Left cardiac atrium (tissue), 4 donors: ENCODE measurements at regions of chr7 and their contacts with region 1.

Region 1: GRCh38 chr7:25565949-25566348 is 337.7 kb upstream of the NPVF start:
- DNase-seq: peak; percentile 45
- ATAC-seq: peak in 1 of 2 donors; percentile 20

Region 2: DNA sequence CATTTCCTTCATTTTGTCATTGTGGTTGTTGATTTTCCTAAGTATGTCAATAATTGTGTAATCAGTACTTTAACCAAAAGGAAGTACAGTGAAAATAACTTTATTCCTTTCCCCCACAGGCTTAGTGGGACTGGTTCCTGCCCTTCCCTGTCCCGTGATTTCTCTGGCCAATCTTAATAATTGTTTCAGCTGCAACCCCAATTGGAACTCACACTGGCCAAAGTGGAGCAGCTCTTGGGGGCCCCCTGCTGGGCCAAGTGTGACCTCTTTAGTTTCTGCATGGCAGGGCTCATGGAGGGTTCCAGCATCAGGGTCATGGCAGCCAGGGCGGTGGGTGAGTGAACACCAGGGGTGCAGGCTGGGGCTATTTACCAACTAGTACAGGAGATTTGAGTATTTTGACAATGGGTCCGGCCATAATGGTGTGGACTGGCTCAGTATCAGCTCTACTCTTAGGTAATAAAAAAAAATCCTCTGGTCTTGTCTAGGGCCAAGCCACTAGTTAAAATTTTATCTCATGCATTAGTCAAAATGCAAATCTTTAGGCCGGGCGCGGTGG is 472.6 kb before region 1 on chr7:
- intact Hi-C with region 1: no loop called
- DNase-seq: peak; percentile 67
- ATAC-seq: peak; percentile 88 to 90

Region 3: GRCh38 chr7:25196132-25196891 is 369.6 kb before region 1 on chr7:
- intact Hi-C with region 1: no loop called
- DNase-seq: no peak
- ATAC-seq: peak in 1 of 2 donors; percentile 27

Region 4: DNA sequence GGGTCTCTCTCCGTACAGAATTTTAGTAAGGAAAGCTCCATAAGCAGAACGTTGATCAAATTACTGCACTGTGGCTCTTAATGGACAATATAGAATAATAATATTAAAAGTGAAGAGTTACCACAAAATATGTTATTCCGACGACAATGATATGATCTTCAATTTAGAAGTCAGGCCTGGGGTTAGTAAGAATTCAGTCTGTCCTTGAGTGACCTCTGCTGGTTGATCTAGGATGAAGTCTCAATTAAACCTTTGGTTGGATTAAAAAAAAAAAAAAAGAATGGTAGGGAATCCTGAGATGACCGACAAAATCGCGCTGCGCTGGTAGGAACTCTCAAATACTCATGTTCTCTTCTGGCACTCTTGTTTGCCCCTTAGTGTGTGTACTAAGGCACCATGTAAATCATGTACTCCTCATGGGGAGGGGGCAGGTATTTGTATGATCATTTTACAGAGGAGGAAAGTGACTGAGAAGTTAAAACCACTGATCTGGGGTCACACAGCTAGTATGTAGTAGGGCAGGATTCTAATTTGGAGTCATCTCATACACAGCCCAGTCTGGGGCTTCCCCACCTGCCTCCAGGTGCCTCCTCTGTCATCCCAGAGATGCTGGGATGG is 176.4 kb before region 1 on chr7:
- intact Hi-C with region 1: loop called (anchors 1 to 5 kb)
- DNase-seq: no peak
- ATAC-seq: peak; percentile 30 to 32

Region 5: DNA sequence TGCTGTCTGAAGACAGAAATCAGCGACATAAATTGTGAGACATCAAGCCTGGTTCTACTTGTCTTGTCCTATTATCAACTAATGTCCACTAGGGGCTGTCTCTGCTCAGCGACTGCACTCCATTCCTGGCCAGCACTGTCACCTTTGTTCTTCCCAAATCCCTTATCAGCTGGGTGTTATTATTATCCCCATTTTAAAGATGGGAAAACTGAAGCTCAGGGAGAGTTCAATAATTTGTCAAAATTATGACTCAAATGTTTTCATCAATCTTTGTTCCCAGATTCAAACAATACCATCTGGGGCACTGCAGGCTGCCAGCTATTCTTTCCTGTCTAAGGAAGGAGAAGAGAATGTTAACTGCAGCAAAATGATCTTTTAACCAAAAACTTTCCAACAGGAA is 154.5 kb after region 1 on chr7:
- intact Hi-C with region 1: no loop called
- DNase-seq: no peak
- ATAC-seq: peak; percentile 27 to 38

Region 6: DNA sequence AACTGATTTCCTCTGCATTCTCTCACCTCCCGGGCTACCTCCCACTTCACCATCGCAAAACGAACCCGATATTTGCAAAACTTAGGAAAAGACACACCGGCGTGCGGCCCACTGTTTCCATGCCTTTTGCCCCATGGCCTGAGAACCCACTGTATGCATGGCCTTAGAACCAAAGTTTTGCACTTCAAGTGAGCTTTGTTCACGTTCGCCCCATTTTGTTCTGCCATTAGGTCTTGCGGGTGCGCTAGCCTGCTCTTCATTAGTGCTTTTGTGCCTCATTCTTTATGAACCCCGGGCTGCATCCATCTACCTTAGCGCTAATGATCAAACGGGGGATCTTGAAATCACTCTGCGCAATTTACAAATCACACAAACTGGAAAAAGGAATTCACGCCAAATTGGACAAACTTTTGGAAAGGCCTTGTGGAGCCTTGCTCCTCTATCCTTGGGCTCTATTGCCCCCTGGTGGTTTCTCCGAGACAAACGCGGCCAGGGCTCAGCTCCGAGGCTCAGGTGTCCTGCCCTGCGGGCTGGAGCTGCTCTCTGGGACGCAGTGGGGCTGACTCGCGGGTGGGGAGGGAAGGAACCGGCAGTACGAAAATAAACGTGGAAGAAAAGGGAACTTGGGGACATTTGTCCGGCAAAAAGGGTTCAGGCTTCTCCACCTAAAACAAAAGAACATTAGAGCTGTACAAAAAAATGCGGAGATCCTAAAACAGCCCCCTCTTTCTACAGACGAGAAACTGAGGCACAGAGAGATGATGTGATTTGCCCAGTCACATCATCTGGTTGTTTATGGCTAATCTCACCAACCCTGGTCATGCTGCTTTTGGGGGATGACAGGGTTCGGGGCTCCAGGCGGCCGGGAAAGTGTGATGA is 285.6 kb after region 1 on chr7:
- intact Hi-C with region 1: loop called (anchors 2 kb)
- DNase-seq: peak; percentile 80
- ATAC-seq: peak; percentile 75 to 77